A673 (cell line): ENCODE measurements at regions of chr11 and their contacts with region 1.

Region 1: GRCh38 chr11:86041975-86042378 is 26.9 kb downstream of the PICALM start:
- DNase-seq: peak; percentile 94
- H3K4me3 ChIP-seq: no peak overlapping the region
- H3K27ac ChIP-seq: no peak overlapping the region
- H3K4me1 ChIP-seq: peaks cover 48% of the 10 kb centered on the region
- H3K27me3 ChIP-seq: no peaks in the 10 kb centered on the region
- CTCF ChIP-seq: peak; percentile 98

Region 2: GRCh38 chr11:86068951-86069407 is 27.0 kb after region 1 on chr11 and contains the start of gene PICALM:
- CTCF ChIA-PET with region 1: interaction called, 10 read pairs
- POLR2A ChIA-PET with region 1: no interaction called
- intact Hi-C with region 1: no loop called
- DNase-seq: peak; percentile 100
- H3K4me3 ChIP-seq: peak within 1 kb of the TSS; percentile 76
- H3K27ac ChIP-seq: peak within 1 kb of the TSS; percentile 90
- H3K4me1 ChIP-seq: peaks cover 34% of the 10 kb centered on the region
- H3K27me3 ChIP-seq: no peaks in the 10 kb centered on the region
- CTCF ChIP-seq: no peak
- total RNA-seq, gene PICALM: 168 and 174 TPM in 2 replicates

Region 3: DNA sequence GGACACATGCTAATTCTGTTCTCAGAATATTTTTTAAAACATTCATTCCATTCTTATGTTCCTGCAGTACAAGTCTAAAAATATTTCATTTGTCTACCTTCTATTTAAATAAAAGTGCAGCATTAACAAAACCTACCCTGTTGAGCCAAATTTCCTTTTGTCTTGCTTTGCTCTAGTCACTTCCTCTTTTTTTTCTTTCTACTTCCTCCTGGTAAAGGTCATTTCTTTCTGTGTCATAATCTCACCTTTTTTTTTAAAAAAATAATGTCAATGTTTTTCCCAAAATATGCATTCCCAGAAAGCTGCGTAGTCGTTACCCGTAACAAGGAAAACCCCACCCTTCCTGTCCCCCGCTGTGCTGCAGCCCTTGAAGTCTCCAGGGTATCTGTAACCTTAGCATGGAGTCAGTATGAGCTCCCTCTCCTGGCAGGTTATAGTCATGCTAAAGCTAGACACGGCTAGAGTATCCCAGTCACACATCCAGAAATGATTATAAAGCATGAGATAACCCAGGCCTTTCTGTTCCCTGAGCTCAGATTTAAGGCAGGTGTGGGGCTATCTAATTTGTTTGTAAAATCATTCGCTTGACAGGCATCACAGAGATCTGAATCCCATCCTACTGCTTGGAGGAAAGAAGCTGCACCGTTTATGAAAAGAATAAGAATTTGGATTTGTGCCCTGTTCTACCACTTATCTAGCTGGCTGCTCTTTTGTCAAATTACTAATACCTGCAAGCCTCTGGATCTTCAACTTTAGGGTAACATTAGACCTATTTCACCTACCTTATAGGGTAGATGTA is 151.5 kb after region 1 on chr11:
- CTCF ChIA-PET with region 1: interaction called, 25 read pairs
- POLR2A ChIA-PET with region 1: no interaction called
- intact Hi-C with region 1: loop called (anchors 2 kb)
- DNase-seq: peak; percentile 94
- H3K4me3 ChIP-seq: peak overlapping the region; percentile 25
- H3K27ac ChIP-seq: no peak overlapping the region
- H3K4me1 ChIP-seq: peaks cover 7% of the 10 kb centered on the region
- H3K27me3 ChIP-seq: no peaks in the 10 kb centered on the region
- CTCF ChIP-seq: peak; percentile 88